ENCODE measurements at regions of chr11 and their contacts with region 1.

Region 1: DNA sequence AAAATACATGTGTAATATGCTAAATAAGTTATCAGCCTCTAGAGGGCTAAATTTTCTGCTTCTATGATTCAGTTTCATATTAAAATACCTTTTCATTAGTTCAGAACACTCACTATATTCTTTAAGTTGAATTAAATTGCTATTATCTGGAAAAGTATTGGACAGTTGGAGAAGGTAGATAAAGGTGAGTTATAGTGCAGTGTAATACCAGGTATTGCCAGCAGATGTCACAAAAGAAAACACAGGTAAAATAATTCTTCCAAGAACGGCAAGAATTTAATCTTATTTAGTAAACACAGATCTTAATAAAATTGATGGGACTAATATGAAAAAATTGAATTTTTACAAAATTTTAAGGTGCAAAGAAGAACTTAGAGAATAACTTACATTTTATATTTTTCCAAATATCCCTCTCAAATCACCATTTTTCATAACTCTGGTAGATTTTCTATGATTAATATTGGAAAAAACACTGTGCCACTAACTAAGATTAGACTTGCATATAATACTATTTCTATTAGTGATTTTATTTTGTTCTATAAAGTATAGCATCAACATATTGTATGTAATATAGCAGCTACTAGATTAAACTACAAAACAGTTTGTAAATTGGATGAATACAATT is 1.7 kb upstream of the LRRC4C start:
- DNase-seq: no peak
- ATAC-seq: no peak
- H3K4me3 ChIP-seq: no peak overlapping the region
- H3K27ac ChIP-seq: no peak overlapping the region
- H3K4me1 ChIP-seq: no peaks in the 10 kb centered on the region
- H3K27me3 ChIP-seq: peaks cover 0 to 2% of the 10 kb centered on the region in 2 experiments; a peak in 1 of 4 replicates
- CTCF ChIP-seq: peak; percentile 47 to 62 (median 59)
- EP300 ChIP-seq: no peak
- POLR2A ChIP-seq: no peak
- RAD21 ChIP-seq: peak; percentile 47

Region 2: GRCh38 chr11:41382927-41383326 is 78.2 kb before region 1 on chr11:
- CTCF ChIA-PET with region 1: no interaction called
- POLR2A ChIA-PET with region 1: no interaction called
- RAD21 ChIA-PET with region 1: no interaction called
- SMC1A ChIA-PET with region 1: no interaction called
- in situ Hi-C with region 1: no loop called
- intact Hi-C with region 1: no loop called
- DNase-seq: no peak
- ATAC-seq: no peak
- H3K4me3 ChIP-seq: no peak overlapping the region
- H3K27ac ChIP-seq: no peak overlapping the region
- H3K4me1 ChIP-seq: no peaks in the 10 kb centered on the region
- H3K27me3 ChIP-seq: no peaks in the 10 kb centered on the region; a peak in 1 of 4 replicates
- CTCF ChIP-seq: no peak
- EP300 ChIP-seq: no peak
- POLR2A ChIP-seq: no peak
- RAD21 ChIP-seq: no peak

Region 3: DNA sequence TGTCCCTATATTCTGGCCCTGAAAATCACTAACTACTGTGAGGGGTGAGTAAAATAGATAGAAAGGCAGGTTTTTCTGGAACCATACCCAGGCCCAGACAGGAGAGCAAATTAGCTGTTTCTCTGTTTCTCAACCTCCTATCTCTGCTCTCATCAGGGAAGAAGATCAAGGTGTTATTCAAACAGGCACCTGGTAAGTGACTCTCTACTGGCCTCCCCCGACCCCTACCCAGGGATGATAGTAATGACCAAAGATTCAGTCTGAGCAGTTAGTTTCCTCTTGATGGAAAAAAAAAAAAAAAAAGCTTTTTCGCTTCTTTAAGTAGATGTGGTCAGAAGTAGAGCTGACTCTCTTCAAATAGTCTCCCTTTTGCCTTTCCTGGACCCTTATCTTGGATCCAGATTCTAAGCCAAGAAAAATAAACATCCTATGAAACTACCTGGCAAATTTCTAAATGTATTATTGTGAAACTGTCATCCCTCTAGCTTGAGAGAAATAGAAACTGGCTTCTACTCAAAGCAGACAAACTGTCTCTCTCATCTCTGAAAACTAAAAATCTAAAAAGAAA is 11.6 kb before region 1 on chr11:
- CTCF ChIA-PET with region 1: interaction called, 6 read pairs
- POLR2A ChIA-PET with region 1: interaction called, 10 read pairs
- RAD21 ChIA-PET with region 1: no interaction called
- SMC1A ChIA-PET with region 1: interaction called, 4 read pairs
- in situ Hi-C with region 1: no loop called
- intact Hi-C with region 1: no loop called
- DNase-seq: no peak
- ATAC-seq: no peak
- H3K4me3 ChIP-seq: no peak overlapping the region
- H3K27ac ChIP-seq: no peak overlapping the region
- H3K4me1 ChIP-seq: no peaks in the 10 kb centered on the region
- H3K27me3 ChIP-seq: no peaks in the 10 kb centered on the region
- CTCF ChIP-seq: no peak
- EP300 ChIP-seq: no peak
- POLR2A ChIP-seq: no peak
- RAD21 ChIP-seq: no peak

Region 4: DNA sequence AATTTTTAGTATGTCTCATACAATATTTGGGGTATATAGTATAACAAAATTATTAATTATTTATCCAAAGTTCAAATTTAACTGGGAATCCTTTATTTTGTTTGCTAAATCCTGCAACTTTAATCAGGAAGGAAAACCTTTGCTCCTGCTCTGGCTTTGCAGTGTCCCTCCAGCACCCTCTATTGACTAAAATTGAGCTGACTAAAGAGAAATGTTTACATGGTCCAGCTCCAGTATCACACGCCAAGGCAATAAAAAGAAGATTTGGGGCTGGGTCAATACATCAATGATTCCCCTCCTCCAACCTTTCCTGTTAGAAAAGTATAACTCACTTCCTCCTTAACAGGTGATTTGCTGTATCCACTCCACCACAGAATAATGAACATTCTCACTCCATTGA is 151.2 kb after region 1 on chr11:
- CTCF ChIA-PET with region 1: interaction called, 14 read pairs
- POLR2A ChIA-PET with region 1: no interaction called
- RAD21 ChIA-PET with region 1: interaction called, 10 read pairs
- SMC1A ChIA-PET with region 1: interaction called, 9 read pairs
- in situ Hi-C with region 1: no loop called
- intact Hi-C with region 1: loop called (anchors 5 kb)
- DNase-seq: no peak
- ATAC-seq: no peak
- H3K4me3 ChIP-seq: no peak overlapping the region
- H3K27ac ChIP-seq: no peak overlapping the region
- H3K4me1 ChIP-seq: no peaks in the 10 kb centered on the region
- H3K27me3 ChIP-seq: no peaks in the 10 kb centered on the region
- CTCF ChIP-seq: peak in 2 of 3 experiments; percentile 9 to 31; a peak in 3 of 6 replicates
- EP300 ChIP-seq: no peak
- POLR2A ChIP-seq: no peak
- RAD21 ChIP-seq: peak; percentile 26; the same call in 1 of the 2 replicates